ENCODE measurements at regions of chr16 and their contacts with region 1.

Region 1: DNA sequence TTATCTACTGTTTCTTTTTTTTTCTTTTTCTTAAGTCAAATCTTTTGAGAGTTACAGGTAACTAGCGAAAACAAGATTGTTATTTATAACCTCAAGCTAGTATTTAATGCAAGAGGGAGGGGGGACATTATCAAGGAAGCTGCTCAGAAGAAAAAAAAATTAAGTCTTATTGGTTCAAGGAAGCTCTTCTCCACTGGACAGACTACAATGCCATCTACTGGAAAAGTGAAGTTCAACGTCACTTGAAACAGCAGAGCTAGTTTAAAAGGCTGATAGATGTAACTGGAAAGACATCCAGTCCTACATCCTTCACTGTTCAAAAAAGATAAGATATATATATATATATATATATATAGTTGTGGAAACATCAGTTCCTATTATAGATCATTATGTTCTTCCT is 418.0 kb upstream of the PSMD7 start:
- DNase-seq: peak in 1 of 10 donors; percentile 12

Region 2: GRCh38 chr16:73565262-73565661 is 313.3 kb before region 1 on chr16:
- intact Hi-C with region 1: loop called (anchors 5 kb)
- DNase-seq: no peak

Measured in posterior cingulate gyrus (tissue), 11 donors.